ENCODE measurements at regions of chr7 and their contacts with region 1.

Region 1: GRCh38 chr7:123692471-123692877 is 36.8 kb downstream of the LMOD2 start:
- DNase-seq: no peak
- ATAC-seq: no peak
- H3K4me3 ChIP-seq: no peak overlapping the region
- H3K4me3 Mint-ChIP-seq: no peak overlapping the region
- H3K27ac ChIP-seq: no peak overlapping the region
- H3K27ac Mint-ChIP-seq: no peak overlapping the region
- H3K4me1 ChIP-seq: no peaks in the 10 kb centered on the region
- H3K4me1 Mint-ChIP-seq: no peaks in the 10 kb centered on the region
- H3K27me3 ChIP-seq: no peaks in the 10 kb centered on the region
- H3K27me3 Mint-ChIP-seq: no peaks in the 10 kb centered on the region
- CTCF ChIP-seq: no peak

Region 2: DNA sequence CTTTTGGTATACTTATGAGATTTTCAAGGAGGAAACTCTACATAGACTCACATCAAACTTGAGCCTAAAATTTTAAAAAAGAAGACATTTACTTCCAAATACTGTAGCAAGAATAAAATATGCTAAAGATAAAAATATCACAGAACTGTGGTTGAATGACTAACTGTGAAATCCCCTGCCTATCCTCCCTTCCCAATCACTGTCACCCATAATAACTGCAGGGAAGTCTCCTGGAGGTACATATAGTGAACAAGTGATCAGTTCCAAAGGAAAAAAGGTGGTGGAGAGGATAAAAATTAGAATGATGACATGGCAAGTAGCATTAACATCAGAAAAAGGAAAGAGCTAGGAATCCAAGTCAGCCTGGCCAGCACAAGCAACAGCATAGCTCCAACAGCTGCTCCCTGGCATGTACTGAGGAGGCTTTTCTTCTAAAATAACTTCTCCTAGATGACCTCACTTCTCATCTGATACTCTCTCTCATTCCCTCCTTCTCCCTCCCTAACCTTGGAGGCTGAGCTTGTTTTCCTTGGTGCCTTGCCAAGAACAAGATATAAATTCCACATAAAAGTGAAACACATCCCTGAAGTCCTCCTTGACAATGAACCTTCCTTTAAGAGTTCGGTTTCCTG is 282.1 kb before region 1 on chr7:
- CTCF ChIA-PET with region 1: no interaction called
- POLR2A ChIA-PET with region 1: no interaction called
- intact Hi-C with region 1: no loop called
- DNase-seq: no peak
- ATAC-seq: no peak
- H3K4me3 ChIP-seq: no peak overlapping the region
- H3K4me3 Mint-ChIP-seq: no peak overlapping the region
- H3K27ac ChIP-seq: no peak overlapping the region
- H3K27ac Mint-ChIP-seq: no peak overlapping the region
- H3K4me1 ChIP-seq: no peaks in the 10 kb centered on the region
- H3K4me1 Mint-ChIP-seq: no peaks in the 10 kb centered on the region
- H3K27me3 ChIP-seq: no peaks in the 10 kb centered on the region
- H3K27me3 Mint-ChIP-seq: no peaks in the 10 kb centered on the region
- CTCF ChIP-seq: no peak

Region 3: DNA sequence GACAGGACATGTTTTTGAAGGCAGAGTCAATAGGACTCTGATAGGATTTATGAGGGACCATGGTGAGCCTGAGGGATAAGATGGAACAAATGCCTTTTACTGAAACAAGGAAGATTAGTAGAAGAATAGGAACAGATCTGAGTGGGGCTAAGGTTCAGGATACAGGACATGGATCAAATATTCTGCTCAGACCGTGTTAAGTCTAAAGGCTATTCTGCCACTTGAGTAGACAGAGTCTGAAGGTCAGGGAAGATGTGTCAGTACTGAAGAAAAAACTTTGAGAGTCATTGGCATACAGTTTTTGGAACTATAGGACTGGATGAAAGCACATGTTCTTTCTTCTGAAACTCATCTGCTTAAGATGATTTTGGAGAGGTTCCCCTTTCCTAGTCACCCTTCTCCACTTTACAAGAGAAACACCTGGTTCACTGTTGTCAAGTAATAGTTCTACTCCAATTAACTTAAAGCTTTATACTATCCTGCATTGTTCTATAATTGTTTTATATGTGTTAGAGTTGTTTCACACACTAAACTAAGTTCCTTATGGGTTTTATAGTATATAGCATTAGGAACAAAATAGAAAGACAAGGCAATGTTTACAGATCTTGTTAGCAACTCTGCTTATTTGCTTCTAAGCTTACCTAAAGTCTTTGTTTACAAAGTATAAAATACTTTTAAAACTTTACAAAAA is 12.9 kb after region 1 on chr7:
- CTCF ChIA-PET with region 1: interaction called, 13 read pairs
- POLR2A ChIA-PET with region 1: interaction called, 3 read pairs
- intact Hi-C with region 1: no loop called
- DNase-seq: no peak
- ATAC-seq: no peak
- H3K4me3 ChIP-seq: no peak overlapping the region
- H3K4me3 Mint-ChIP-seq: no peak overlapping the region
- H3K27ac ChIP-seq: no peak overlapping the region
- H3K27ac Mint-ChIP-seq: no peak overlapping the region
- H3K4me1 ChIP-seq: no peaks in the 10 kb centered on the region
- H3K4me1 Mint-ChIP-seq: no peaks in the 10 kb centered on the region
- H3K27me3 ChIP-seq: no peaks in the 10 kb centered on the region
- H3K27me3 Mint-ChIP-seq: no peaks in the 10 kb centered on the region
- CTCF ChIP-seq: no peak

Measured in B cell (primary cell).